Activated CD4-positive, alpha-beta T cell treated with anti-CD3 and anti-CD28 coated beads, Interleukin-2, amount 10 ng/mL, durations not matched to agents 24 days and 14 days (primary cell): ENCODE measurements at regions of chr10 and their contacts with region 1.

Region 1: DNA sequence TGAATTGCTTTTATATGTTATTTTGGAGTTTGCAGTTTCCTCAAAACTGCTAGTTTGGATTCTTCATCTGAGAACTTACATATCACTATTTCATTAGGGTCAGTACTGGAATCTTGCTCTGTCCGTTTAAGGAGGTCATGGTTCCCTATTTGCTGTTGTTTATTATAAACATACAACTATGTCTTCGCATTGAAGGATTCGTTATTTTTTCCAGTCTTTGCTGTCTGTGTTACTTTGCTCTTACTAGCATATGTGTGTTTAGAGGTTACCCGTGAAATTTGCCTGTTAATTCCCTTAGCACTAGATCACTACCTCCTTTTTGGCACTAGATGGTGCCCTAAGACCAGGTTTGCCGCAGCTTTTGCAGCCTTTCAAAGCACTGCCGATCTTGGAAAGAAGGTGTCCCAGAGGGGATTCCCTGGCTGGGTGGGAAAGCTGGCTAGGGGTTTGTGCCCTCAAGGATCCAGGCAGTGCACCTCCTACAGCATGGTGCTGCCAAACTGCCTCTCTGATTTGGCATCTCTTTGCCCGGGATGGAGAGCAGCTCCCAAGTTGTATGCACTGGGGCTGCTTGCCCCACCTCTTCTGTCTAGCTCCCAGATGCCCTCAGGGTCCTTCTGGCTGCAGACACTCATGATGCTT is 103.1 kb upstream of the APBB1IP start:
- DNase-seq: peak; percentile 89
- H3K4me3 Mint-ChIP-seq: peak overlapping the region; percentile 68
- H3K27ac Mint-ChIP-seq: peak overlapping the region; percentile 38
- H3K4me1 Mint-ChIP-seq: peaks cover 8% of the 10 kb centered on the region
- H3K27me3 Mint-ChIP-seq: peaks cover 3% of the 10 kb centered on the region

Region 2: DNA sequence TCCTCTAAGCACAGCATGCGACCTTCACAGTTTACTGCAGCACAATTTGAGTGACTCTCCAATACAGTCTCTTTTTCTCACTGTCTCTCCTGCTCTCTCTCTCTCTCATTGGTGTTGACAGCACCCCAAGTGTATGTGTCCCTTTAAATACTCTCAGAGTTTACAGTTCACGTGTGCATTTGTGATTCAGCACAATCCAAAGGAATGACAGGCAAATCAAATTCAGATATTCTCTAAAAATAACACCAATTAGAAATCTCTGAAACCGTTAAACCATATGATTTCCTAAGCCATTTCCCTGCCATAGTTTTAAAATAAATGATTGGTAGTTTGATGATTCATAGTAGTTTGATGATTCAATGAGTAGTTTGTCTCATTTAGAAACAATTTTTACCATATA is 222.5 kb before region 1 on chr10:
- intact Hi-C with region 1: no loop called
- DNase-seq: no peak
- H3K4me3 Mint-ChIP-seq: no peak overlapping the region
- H3K27ac Mint-ChIP-seq: no peak overlapping the region
- H3K4me1 Mint-ChIP-seq: no peaks in the 10 kb centered on the region
- H3K27me3 Mint-ChIP-seq: peaks cover 5% of the 10 kb centered on the region

Region 3: GRCh38 chr10:26177341-26177740 is 157.7 kb before region 1 on chr10:
- intact Hi-C with region 1: no loop called
- DNase-seq: no peak
- H3K4me3 Mint-ChIP-seq: no peak overlapping the region
- H3K27ac Mint-ChIP-seq: no peak overlapping the region
- H3K4me1 Mint-ChIP-seq: no peaks in the 10 kb centered on the region
- H3K27me3 Mint-ChIP-seq: peaks cover 2% of the 10 kb centered on the region

Region 4: DNA sequence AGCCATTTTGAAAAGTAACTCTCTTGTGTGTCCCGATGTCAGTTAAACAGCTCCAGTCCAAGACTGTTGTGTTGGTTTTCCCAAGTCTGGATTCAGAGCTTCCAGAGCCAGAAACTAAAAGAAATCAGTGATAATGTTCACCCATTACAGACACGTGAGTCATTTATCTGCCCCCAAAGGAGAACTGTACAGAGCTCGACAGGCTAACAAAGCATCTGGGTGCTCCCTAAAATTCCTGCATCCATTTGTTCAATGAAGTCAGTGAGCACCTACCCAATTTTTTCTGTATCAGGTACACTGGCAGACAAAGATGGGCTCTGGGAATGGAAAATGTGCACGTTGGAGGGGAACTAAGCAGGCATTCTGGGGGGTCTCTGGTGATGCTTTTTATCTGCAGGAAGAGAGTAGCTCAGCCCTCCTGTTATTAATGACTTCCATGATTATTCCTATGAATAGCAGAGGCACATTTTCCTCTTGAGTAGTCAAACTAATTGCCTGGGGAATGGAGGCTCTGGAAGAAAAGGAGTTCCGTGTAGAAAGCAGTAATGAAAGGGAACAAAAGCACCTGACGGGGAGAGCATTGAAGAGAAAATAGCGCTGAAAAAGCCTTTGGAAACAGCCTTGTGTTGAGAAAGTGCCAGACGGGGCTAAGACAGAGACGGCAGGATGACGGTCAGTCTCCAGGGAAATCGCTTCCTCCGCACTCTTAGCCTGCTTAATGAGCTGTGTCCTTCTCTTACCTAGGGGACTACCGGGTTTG is 43.2 kb before region 1 on chr10:
- intact Hi-C with region 1: no loop called
- DNase-seq: no peak
- H3K4me3 Mint-ChIP-seq: no peak overlapping the region
- H3K27ac Mint-ChIP-seq: no peak overlapping the region
- H3K4me1 Mint-ChIP-seq: no peaks in the 10 kb centered on the region
- H3K27me3 Mint-ChIP-seq: peaks cover 10% of the 10 kb centered on the region

Region 5: DNA sequence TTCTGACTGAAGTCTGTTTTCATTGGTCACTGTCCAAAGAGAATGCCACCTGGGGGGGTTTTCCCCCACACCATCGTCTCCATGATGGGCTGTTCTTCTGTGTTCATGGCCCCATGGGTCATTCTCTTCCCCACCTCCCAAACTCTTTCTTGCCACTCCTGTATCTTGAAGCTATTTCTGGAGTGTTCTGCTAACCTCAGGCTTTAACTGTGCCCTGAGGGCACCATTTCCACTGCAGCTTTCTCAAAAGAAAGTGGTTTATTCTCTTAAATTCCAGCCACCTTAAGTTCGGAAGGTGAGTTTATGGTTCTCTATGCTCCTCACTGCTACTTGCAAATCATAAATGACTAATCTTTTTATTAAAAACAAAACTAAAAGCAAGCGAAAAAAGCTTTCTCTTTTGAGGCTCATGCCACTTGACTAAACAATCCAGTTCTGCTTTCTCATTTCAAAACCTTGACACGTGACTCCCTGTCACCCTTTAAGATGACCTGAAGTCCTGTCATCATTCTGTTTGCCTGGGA is 95.7 kb after region 1 on chr10:
- intact Hi-C with region 1: loop called (anchors 1 kb)
- DNase-seq: peak; percentile 82
- H3K4me3 Mint-ChIP-seq: peak overlapping the region; percentile 48
- H3K27ac Mint-ChIP-seq: peak overlapping the region; percentile 87
- H3K4me1 Mint-ChIP-seq: peaks cover 12% of the 10 kb centered on the region
- H3K27me3 Mint-ChIP-seq: no peaks in the 10 kb centered on the region

Region 6: DNA sequence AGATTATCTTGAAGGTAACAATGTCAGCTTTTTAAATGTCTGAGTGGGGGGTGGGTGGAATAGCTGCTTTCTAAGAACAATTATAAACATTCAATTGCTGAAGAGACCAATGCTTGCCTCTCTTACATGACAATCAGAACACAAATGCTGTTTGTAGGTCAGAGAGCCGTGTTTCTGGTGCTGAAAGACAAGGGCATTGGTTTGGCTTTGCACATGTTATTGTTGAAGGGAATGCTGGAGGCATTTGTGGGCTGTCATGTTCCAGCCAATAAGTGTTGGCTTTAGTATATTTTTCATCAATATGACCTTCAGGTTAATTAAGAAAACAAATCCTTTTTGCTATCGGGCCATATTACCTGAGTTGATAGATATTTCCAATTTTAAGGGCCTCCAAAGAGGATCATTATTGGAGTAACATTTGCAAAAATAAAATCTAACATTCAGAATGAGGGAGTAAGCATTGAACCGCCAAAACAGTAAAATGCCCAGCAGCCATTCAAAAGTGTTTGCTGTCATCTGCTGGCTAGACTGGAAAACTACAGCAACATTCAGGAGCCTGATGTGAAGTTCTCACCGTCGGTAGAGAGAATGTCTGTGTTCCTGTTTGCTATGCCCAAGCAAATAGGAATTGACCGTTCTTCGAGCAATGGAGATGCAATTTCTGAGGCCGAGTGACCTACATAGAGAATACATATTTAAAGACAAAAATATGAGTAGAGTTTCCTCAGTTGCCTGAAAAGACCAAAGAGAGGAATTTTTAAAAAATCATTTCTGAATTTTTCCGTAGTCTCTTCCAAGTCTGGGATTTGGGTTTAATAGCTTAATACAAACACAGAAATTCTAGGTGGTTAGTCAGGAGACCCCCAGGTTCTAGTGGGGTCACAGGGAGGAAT is 221.9 kb after region 1 on chr10:
- intact Hi-C with region 1: loop called (anchors 1 kb)
- DNase-seq: peak; percentile 80
- H3K4me3 Mint-ChIP-seq: no peak overlapping the region
- H3K27ac Mint-ChIP-seq: peak overlapping the region; percentile 16
- H3K4me1 Mint-ChIP-seq: peaks cover 2% of the 10 kb centered on the region
- H3K27me3 Mint-ChIP-seq: no peaks in the 10 kb centered on the region

Region 7: GRCh38 chr10:26725837-26726727 is 391.0 kb after region 1 on chr10:
- intact Hi-C with region 1: loop called (anchors 10 kb)
- DNase-seq: peak; percentile 80
- H3K4me3 Mint-ChIP-seq: no peak overlapping the region
- H3K27ac Mint-ChIP-seq: no peak overlapping the region
- H3K4me1 Mint-ChIP-seq: peaks cover 14% of the 10 kb centered on the region
- H3K27me3 Mint-ChIP-seq: no peaks in the 10 kb centered on the region

Region 8: DNA sequence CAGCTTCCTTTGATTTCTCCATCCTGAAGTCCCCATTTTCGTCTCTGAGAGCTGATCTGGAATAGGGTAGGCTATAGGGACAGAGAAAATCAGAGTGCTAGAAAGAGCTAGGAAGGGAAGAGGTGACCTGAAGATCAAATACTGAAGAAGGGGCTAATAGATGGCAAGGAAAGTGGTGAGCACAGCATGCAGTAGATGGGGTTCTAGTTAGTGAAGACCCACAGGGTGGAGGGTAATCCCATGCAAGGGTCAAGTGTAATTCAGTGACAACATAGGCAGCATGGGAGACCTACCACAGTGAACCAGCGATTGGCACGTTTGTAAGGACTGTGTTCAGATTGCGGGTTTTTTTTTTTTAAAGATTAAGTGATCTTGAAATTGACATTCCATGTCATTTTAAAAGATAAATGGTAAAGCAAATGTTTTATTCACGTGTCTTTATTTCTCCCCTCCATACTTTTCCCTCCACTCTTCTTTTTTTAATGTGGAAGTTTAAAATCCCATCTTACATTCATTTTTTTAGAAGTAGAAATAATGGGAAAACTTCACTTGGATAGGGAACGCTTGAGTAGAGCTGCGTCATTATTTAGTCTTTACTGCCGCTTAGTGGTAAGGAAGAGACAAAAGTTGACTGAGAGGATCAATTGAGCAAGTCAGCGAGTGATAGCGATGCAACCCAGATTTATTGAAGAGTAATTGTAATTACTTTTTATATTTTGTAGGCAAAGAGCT is 546.7 kb after region 1 on chr10:
- intact Hi-C with region 1: loop called (anchors 2 kb)
- DNase-seq: peak; percentile 72
- H3K4me3 Mint-ChIP-seq: no peak overlapping the region
- H3K27ac Mint-ChIP-seq: no peak overlapping the region
- H3K4me1 Mint-ChIP-seq: peaks cover 6% of the 10 kb centered on the region
- H3K27me3 Mint-ChIP-seq: peaks cover 31% of the 10 kb centered on the region